Cardiac septum (tissue), 1 donor: ENCODE measurements at regions of chr10 and their contacts with region 1.

Region 1: GRCh38 chr10:52215745-52216361 is 98.2 kb upstream of the DKK1 start:
- DNase-seq: no peak

Region 2: DNA sequence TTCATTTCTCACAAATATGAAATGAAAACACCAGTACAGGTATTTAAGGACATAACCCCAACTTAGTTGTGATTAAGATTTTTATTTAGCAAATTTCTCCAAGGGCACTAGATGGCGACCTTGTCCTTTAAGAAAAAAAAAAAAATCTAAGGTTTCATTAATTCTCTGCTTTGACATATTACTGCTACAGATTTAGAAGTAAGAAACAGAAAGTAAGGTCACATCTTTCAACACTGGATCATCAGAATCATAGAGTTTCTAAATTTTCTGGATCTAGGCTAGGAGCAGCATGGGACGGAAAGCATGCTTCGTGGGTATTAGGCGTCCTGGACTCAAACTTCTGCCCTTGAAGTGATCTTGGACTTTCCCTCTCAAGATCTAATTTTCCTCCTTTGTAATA is 1227.1 kb before region 1 on chr10:
- intact Hi-C with region 1: loop called (anchors 5 kb)
- DNase-seq: no peak

Region 3: GRCh38 chr10:51010977-51011376 is 1204.9 kb before region 1 on chr10:
- intact Hi-C with region 1: loop called (anchors 5 kb)
- DNase-seq: no peak

Region 4: DNA sequence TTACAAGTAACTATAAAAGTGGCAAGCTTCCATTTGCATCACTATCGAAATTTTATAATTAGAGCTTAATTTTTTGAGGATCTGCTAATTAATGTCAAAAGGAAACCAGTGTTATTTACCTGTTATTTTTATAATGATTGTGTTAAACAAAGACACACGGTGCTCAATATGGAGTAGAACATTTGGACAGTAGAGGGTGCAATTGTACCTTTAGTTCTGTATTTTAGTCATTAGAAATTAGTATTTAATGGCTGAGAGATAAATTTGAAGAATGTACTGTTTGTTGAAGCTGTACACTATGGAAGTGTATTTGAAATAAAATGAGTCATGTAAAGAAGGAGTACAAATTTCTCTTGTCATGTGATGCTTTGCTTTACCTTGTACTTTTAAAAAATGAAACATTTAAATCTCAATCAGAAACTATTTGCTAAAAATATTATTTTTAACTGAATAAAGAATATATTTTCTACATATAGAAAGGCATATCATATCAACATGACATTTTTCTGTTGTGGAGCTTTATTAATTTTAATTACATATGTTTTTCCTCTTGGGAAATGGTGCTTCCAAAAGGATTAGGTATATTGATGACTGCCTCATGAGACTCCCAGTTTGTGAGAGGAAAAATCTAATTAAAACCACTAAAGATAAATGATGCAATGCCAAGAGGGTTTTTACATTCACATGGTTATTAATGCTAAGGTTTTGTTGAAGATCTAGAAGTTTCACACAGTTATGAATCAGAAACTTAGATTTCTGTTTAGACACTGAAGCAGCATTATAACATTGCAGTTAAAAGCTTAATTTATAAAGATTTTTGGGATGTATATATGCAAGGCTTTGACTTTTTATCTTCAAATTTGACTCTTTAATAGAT is 1152.0 kb before region 1 on chr10:
- intact Hi-C with region 1: loop called (anchors 5 kb)
- DNase-seq: no peak

Region 5: DNA sequence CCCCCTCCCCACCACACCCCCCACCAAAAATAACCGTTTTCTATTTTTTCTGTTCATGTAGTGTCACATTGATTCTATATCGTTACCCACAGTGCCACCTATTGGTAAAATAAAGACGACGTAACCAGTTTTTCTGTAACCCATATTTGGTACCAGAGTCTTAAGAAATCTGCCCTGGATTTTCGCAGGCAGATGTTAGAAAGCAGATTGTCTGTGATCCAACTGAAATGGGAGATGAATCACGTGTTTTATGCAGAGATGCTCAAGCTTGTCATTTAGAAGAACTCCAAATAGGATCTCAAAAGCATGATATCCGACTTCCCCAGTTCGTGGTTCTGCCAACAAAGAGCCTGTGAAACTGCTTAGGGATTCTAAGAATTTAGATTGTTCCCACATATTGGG is 255.4 kb before region 1 on chr10:
- intact Hi-C with region 1: loop called (anchors 10 kb)
- DNase-seq: no peak

Region 6: DNA sequence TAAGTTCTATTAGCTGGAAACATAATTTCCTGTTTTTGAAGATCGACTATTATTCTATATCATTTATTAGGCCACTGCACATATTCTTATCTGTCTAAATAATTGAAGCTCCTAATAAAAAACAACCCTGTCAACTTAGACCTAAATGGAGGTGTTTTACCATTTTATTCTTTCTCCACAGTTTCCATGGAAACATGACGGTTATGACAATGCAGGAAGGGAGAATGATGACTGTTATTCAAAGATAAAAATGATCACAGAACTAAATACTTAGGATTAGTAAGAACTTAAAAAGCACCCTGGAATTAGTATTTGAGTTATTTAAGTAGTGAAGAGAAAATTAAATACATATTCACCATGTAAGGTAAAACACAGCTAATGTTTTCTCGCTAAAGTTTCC is 21.7 kb before region 1 on chr10:
- intact Hi-C with region 1: no loop called
- DNase-seq: no peak